B cell (primary cell): ENCODE measurements at regions of chr9 and their contacts with region 1.

Region 1: DNA sequence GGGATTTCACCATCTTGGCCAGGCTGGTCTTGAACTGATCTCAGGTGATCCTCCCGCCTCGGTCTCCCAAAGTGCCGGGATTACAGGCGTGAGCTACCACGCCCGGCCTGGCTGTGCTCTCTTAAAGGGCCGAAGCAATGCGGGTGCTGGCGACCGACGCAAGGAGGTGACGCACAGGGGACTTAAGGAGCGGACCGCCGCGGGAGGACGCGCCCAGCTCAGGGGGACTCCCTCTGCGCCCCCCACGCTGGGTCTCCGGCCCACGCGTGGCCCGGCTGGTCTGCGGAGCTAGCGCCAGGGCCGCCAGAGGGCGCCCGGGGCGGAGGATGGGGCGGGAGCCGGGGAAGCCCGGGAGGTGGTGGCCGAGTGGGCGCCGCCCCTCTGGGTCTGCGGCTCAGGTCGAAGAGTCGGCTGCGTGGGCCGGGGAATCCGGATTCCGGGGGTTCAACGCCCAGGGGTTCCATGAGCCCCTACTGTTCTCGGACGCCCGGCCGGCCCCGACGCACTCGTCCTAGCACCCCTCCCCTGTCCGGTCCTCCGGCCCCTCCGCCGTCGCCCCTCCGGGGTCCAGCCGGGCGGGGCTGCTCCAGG is 502 bp upstream of the CERCAM start:
- DNase-seq: peak; percentile 87
- ATAC-seq: peak; percentile 86
- H3K4me3 ChIP-seq: peak overlapping the region; percentile 31 to 94 (median 73)
- H3K4me3 Mint-ChIP-seq: peak overlapping the region; percentile 82
- H3K27ac ChIP-seq: peak overlapping the region in 1 of 2 donors; percentile 59
- H3K27ac Mint-ChIP-seq: peak overlapping the region; percentile 20
- H3K4me1 ChIP-seq: peaks cover 20 to 21% of the 10 kb centered on the region in 2 donors
- H3K4me1 Mint-ChIP-seq: peaks cover 7% of the 10 kb centered on the region
- H3K27me3 ChIP-seq: peaks cover 0 to 34% (median 8%) of the 10 kb centered on the region in 4 experiments
- H3K27me3 Mint-ChIP-seq: peaks cover 22% of the 10 kb centered on the region
- CTCF ChIP-seq: peak; percentile 92

Region 2: DNA sequence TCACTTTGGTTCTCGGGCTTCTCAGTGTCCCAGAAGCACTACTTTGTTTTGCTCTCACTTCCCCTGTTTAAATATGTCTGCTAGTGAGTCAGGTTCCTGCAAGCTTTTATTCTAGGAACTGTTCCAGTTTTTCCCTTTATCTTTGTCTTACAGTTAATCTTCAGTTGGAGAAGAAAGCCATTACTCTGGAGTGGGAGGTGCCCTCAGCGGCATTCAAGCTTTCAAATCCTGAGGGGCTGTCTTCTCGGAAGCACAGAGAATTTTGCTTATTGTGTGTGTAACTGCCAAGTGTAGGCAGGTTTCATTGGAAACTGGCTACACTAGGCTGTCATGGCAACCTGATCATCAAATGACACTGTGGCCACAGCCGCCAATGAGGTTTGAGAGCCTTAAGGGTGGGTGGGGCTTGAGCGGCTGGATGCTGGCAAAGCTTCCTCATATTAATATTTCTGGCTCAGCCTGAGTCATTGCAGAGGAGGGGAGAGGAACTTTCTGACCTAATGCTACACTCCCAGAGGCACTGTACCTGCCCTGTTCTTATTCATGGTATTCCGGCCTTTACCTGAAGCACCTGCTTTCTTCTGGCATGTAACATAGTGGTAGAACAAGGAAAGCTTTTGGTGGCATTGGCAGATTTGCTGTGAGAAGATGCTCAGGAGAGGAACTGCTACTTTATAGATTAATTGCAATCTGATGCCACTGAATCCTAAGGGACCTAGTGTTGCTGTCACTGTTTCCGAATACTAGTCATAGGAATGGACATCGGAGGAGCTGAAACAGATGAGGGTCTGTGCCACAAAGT is 325.8 kb before region 1 on chr9:
- CTCF ChIA-PET with region 1: no interaction called
- POLR2A ChIA-PET with region 1: no interaction called
- intact Hi-C with region 1: no loop called
- DNase-seq: peak; percentile 92
- ATAC-seq: peak; percentile 93
- H3K4me3 ChIP-seq: peak overlapping the region in 1 of 5 experiments; percentile 6
- H3K4me3 Mint-ChIP-seq: peak overlapping the region; percentile 83
- H3K27ac ChIP-seq: peak overlapping the region; percentile 75 to 94
- H3K27ac Mint-ChIP-seq: peak overlapping the region; percentile 98
- H3K4me1 ChIP-seq: peaks cover 31 to 43% of the 10 kb centered on the region in 2 donors
- H3K4me1 Mint-ChIP-seq: peaks cover 43% of the 10 kb centered on the region
- H3K27me3 ChIP-seq: no peaks in the 10 kb centered on the region
- H3K27me3 Mint-ChIP-seq: no peaks in the 10 kb centered on the region
- CTCF ChIP-seq: no peak

Region 3: GRCh38 chr9:128191406-128192046 is 228.6 kb before region 1 on chr9 and contains the start of gene CIZ1:
- CTCF ChIA-PET with region 1: no interaction called
- POLR2A ChIA-PET with region 1: no interaction called
- intact Hi-C with region 1: loop called (anchors 2 kb)
- DNase-seq: peak; percentile 88
- ATAC-seq: peak; percentile 90
- H3K4me3 ChIP-seq: peak within 1 kb of the TSS; percentile 26 to 82 (median 73)
- H3K4me3 Mint-ChIP-seq: peak within 1 kb of the TSS; percentile 94
- H3K27ac ChIP-seq: peak within 1 kb of the TSS; percentile 44 to 76
- H3K27ac Mint-ChIP-seq: peak within 1 kb of the TSS; percentile 92
- H3K4me1 ChIP-seq: peaks cover 12 to 24% of the 10 kb centered on the region in 2 donors
- H3K4me1 Mint-ChIP-seq: peaks cover 29% of the 10 kb centered on the region
- H3K27me3 ChIP-seq: no peaks in the 10 kb centered on the region
- H3K27me3 Mint-ChIP-seq: no peaks in the 10 kb centered on the region
- CTCF ChIP-seq: peak; percentile 84
- total RNA-seq, gene CIZ1: 160 and 169 TPM in 2 replicates

Region 4: DNA sequence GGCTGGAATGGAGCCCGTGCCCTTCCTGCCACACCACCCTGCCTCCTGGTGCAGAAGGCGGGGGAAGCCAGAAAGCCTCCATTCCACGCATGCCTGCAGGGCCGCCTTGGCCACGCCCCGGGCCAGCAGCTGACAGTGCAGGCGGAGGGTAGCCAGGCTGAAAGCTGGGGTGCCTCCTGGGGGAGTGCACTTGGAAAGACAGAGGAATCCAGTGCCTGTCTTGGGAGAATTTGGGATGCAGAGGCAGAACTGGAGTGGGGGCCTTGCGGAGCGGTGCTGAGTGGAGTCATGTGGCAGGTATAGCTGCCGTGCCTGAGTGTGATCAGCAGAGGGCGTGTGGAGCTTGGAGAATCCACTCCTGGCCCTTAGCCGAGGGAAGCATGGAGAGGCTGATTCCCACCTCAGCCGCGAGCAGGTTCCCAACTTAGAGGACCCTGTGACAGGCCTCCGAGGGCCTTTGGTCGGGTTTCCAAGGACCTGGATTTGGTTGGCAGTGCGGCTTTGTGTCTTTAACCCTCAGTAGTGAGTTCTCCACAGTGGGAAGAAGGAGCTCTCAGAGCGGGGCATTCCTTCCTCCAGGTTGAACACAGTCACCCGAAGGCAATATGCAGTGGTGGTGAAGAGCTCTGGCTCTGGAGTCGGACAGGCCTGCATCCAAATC is 58.0 kb before region 1 on chr9:
- CTCF ChIA-PET with region 1: interaction called, 11 read pairs
- POLR2A ChIA-PET with region 1: no interaction called
- intact Hi-C with region 1: loop called (anchors 1 kb)
- DNase-seq: peak; percentile 73
- ATAC-seq: peak; percentile 87
- H3K4me3 ChIP-seq: peak overlapping the region in 4 of 5 experiments; percentile 7 to 63 (median 48)
- H3K4me3 Mint-ChIP-seq: peak overlapping the region; percentile 85
- H3K27ac ChIP-seq: no peak overlapping the region
- H3K27ac Mint-ChIP-seq: no peak overlapping the region
- H3K4me1 ChIP-seq: peaks cover 10 to 21% of the 10 kb centered on the region in 2 donors
- H3K4me1 Mint-ChIP-seq: peaks cover 9% of the 10 kb centered on the region
- H3K27me3 ChIP-seq: no peaks in the 10 kb centered on the region
- H3K27me3 Mint-ChIP-seq: no peaks in the 10 kb centered on the region
- CTCF ChIP-seq: peak; percentile 89

Region 5: DNA sequence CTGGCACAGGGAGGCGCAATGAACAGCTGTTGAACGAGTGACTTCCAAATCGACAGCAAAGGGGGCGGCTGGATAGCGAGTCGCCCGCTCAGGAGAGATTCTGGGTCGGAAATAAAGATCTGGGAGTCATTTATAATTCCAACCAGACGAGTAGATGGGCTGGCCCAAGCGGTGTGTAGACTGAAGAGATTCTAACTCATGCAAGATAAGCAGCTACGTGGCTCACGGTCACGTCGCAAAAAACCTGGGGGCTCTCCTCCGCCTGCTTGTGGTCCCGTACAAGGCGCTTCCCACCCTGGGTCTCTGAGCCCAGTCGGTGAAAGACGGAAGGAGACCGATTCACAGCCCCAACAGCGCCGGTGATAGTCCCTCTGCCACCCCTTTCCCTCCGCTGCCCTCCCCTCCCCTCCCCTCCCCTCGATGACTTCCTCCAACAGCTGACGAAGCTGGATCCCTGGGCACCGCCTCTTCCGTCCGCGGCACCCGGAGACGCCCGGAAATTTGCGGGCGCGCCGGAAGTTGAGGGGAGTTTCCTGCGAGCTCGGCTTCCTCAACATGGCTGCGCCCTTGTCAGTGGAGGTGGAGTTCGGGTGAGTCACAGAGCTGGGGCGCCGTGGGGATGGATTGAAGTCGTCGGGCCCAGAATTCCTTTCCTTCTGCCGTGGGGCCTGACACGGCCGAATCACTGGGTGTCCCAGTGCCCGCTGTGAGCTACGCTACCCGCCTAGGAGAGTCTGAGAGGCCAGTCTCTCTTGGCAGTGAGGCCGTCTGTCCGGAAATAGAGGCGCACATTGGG is 49.1 kb before region 1 on chr9 and contains the start of gene URM1:
- CTCF ChIA-PET with region 1: interaction called, 14 read pairs
- POLR2A ChIA-PET with region 1: interaction called, 3 read pairs
- intact Hi-C with region 1: loop called (anchors 2 kb)
- DNase-seq: peak; percentile 96
- ATAC-seq: peak; percentile 94
- H3K4me3 ChIP-seq: peak within 1 kb of the TSS; percentile 86 to 98 (median 90)
- H3K4me3 Mint-ChIP-seq: peak within 1 kb of the TSS; percentile 95
- H3K27ac ChIP-seq: peak within 1 kb of the TSS; percentile 83 to 96
- H3K27ac Mint-ChIP-seq: peak within 1 kb of the TSS; percentile 96
- H3K4me1 ChIP-seq: peaks cover 15 to 23% of the 10 kb centered on the region in 2 donors
- H3K4me1 Mint-ChIP-seq: peaks cover 30% of the 10 kb centered on the region
- H3K27me3 ChIP-seq: no peaks in the 10 kb centered on the region
- H3K27me3 Mint-ChIP-seq: no peaks in the 10 kb centered on the region
- CTCF ChIP-seq: no peak
- total RNA-seq, gene URM1: 35.6 and 43.8 TPM in 2 replicates

Region 6: GRCh38 chr9:128438343-128439109 is 18.4 kb after region 1 on chr9:
- CTCF ChIA-PET with region 1: interaction called, 14 read pairs
- POLR2A ChIA-PET with region 1: no interaction called
- intact Hi-C with region 1: no loop called
- DNase-seq: peak; percentile 84
- ATAC-seq: peak; percentile 94
- H3K4me3 ChIP-seq: no peak overlapping the region
- H3K4me3 Mint-ChIP-seq: no peak overlapping the region
- H3K27ac ChIP-seq: no peak overlapping the region
- H3K27ac Mint-ChIP-seq: no peak overlapping the region
- H3K4me1 ChIP-seq: peaks cover 3 to 8% of the 10 kb centered on the region in 2 donors
- H3K4me1 Mint-ChIP-seq: peaks cover 7% of the 10 kb centered on the region
- H3K27me3 ChIP-seq: no peaks in the 10 kb centered on the region
- H3K27me3 Mint-ChIP-seq: no peaks in the 10 kb centered on the region
- CTCF ChIP-seq: peak; percentile 90

Region 7: GRCh38 chr9:128504485-128505413 is 84.6 kb after region 1 on chr9 and contains the start of gene GLE1:
- CTCF ChIA-PET with region 1: interaction called, 7 read pairs
- POLR2A ChIA-PET with region 1: no interaction called
- intact Hi-C with region 1: loop called (anchors 1 kb)
- DNase-seq: peak; percentile 97
- ATAC-seq: peak; percentile 93
- H3K4me3 ChIP-seq: peak within 1 kb of the TSS; percentile 85 to 97 (median 87)
- H3K4me3 Mint-ChIP-seq: peak within 1 kb of the TSS; percentile 100
- H3K27ac ChIP-seq: peak within 1 kb of the TSS; percentile 69 to 80
- H3K27ac Mint-ChIP-seq: peak within 1 kb of the TSS; percentile 99
- H3K4me1 ChIP-seq: peaks cover 8 to 13% of the 10 kb centered on the region in 2 donors
- H3K4me1 Mint-ChIP-seq: peaks cover 23% of the 10 kb centered on the region
- H3K27me3 ChIP-seq: no peaks in the 10 kb centered on the region
- H3K27me3 Mint-ChIP-seq: no peaks in the 10 kb centered on the region
- CTCF ChIP-seq: no peak
- total RNA-seq, gene GLE1: 30.3 and 31.9 TPM in 2 replicates